HCT116 (cell line): ENCODE measurements at regions of chr9 and their contacts with region 1.

Region 1: GRCh38 chr9:135275571-135276289 is 188.3 kb downstream of the OLFM1 start:
- DNase-seq: no peak
- ATAC-seq: no peak
- H3K4me3 ChIP-seq: no peak overlapping the region
- H3K27ac ChIP-seq: no peak overlapping the region
- H3K4me1 ChIP-seq: no peaks in the 10 kb centered on the region
- H3K27me3 ChIP-seq: peaks cover 22% of the 10 kb centered on the region; the same call in 1 of the 2 replicates
- CTCF ChIP-seq: no peak
- POLR2A ChIP-seq: no peak
- RAD21 ChIP-seq: no peak

Region 2: GRCh38 chr9:135178498-135178897 is 97.2 kb before region 1 on chr9:
- CTCF ChIA-PET with region 1: no interaction called
- POLR2A ChIA-PET with region 1: no interaction called
- RAD21 ChIA-PET with region 1: no interaction called
- intact Hi-C with region 1: no loop called
- DNase-seq: no peak
- ATAC-seq: no peak
- H3K4me3 ChIP-seq: no peak overlapping the region
- H3K27ac ChIP-seq: no peak overlapping the region
- H3K4me1 ChIP-seq: no peaks in the 10 kb centered on the region
- H3K27me3 ChIP-seq: peaks cover 23% of the 10 kb centered on the region; the same call in 1 of the 2 replicates
- CTCF ChIP-seq: no peak
- POLR2A ChIP-seq: no peak
- RAD21 ChIP-seq: no peak

Region 3: DNA sequence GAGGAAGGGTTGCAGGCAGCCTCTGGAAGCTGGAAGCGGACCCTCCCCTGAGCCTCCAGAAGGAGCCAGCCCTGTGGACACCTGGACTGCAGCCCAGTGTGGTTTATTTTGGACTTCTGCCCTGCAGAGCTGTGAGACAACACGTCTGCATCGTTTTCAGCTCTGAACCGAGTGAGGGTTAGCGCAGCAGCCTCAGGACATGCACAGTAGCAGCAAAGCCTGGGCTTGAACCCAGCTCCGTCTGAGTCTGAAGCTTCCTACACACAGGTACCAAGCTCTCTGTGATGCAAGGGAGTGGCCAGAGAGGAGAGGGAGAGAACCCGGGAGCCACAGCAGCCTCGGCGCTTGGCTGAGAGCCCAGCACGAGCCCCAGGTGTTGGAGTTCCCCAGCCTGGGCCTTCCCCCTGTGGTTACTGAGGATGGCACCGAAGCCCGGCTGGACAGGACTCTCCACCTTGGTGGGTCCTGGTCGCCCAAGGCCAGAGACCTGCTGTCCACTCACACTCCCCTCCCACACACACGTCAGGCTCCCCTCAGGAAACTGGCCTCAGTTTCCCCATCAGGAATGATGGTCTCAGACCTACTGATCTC is 60.1 kb before region 1 on chr9:
- CTCF ChIA-PET with region 1: no interaction called
- POLR2A ChIA-PET with region 1: no interaction called
- RAD21 ChIA-PET with region 1: interaction called in 1 of 2 experiments, 3 read pairs
- intact Hi-C with region 1: loop called (anchors 10 kb)
- DNase-seq: no peak
- ATAC-seq: no peak
- H3K4me3 ChIP-seq: no peak overlapping the region
- H3K27ac ChIP-seq: no peak overlapping the region
- H3K4me1 ChIP-seq: no peaks in the 10 kb centered on the region
- H3K27me3 ChIP-seq: 0 out of 2 replicates have a peak, but pooled peaks cover 4% of the 10 kb centered on the region
- CTCF ChIP-seq: no peak
- POLR2A ChIP-seq: no peak
- RAD21 ChIP-seq: no peak

Region 4: GRCh38 chr9:135294826-135295225 is 19.1 kb after region 1 on chr9:
- CTCF ChIA-PET with region 1: no interaction called
- POLR2A ChIA-PET with region 1: no interaction called
- RAD21 ChIA-PET with region 1: no interaction called
- intact Hi-C with region 1: no loop called
- DNase-seq: peak; percentile 12
- ATAC-seq: peak; percentile 44; the same call in 1 of the 2 replicates
- H3K4me3 ChIP-seq: no peak overlapping the region
- H3K27ac ChIP-seq: no peak overlapping the region
- H3K4me1 ChIP-seq: peaks cover 0 to 14% of the 10 kb centered on the region in 2 experiments; a peak in 2 of 4 replicates
- H3K27me3 ChIP-seq: peaks cover 7% of the 10 kb centered on the region; the same call in 1 of the 2 replicates
- CTCF ChIP-seq: no peak
- POLR2A ChIP-seq: no peak
- RAD21 ChIP-seq: no peak

Region 5: GRCh38 chr9:135308821-135309762 is 33.4 kb after region 1 on chr9:
- CTCF ChIA-PET with region 1: no interaction called
- POLR2A ChIA-PET with region 1: no interaction called
- RAD21 ChIA-PET with region 1: no interaction called
- intact Hi-C with region 1: no loop called
- DNase-seq: no peak
- ATAC-seq: no peak
- H3K4me3 ChIP-seq: no peak overlapping the region
- H3K27ac ChIP-seq: no peak overlapping the region
- H3K4me1 ChIP-seq: no peaks in the 10 kb centered on the region
- H3K27me3 ChIP-seq: peaks cover 38% of the 10 kb centered on the region
- CTCF ChIP-seq: no peak
- POLR2A ChIP-seq: no peak
- RAD21 ChIP-seq: no peak

Region 6: GRCh38 chr9:135329571-135330306 is 54.0 kb after region 1 on chr9:
- CTCF ChIA-PET with region 1: no interaction called
- POLR2A ChIA-PET with region 1: no interaction called
- RAD21 ChIA-PET with region 1: no interaction called
- intact Hi-C with region 1: no loop called
- DNase-seq: no peak
- ATAC-seq: no peak
- H3K4me3 ChIP-seq: no peak overlapping the region
- H3K27ac ChIP-seq: no peak overlapping the region
- H3K4me1 ChIP-seq: peaks cover 0 to 5% of the 10 kb centered on the region in 2 experiments; a peak in 1 of 4 replicates
- H3K27me3 ChIP-seq: no peaks in the 10 kb centered on the region
- CTCF ChIP-seq: no peak
- POLR2A ChIP-seq: no peak
- RAD21 ChIP-seq: no peak